GM23248 (cell line): ENCODE measurements at regions of chr9 and their contacts with region 1.

Region 1: DNA sequence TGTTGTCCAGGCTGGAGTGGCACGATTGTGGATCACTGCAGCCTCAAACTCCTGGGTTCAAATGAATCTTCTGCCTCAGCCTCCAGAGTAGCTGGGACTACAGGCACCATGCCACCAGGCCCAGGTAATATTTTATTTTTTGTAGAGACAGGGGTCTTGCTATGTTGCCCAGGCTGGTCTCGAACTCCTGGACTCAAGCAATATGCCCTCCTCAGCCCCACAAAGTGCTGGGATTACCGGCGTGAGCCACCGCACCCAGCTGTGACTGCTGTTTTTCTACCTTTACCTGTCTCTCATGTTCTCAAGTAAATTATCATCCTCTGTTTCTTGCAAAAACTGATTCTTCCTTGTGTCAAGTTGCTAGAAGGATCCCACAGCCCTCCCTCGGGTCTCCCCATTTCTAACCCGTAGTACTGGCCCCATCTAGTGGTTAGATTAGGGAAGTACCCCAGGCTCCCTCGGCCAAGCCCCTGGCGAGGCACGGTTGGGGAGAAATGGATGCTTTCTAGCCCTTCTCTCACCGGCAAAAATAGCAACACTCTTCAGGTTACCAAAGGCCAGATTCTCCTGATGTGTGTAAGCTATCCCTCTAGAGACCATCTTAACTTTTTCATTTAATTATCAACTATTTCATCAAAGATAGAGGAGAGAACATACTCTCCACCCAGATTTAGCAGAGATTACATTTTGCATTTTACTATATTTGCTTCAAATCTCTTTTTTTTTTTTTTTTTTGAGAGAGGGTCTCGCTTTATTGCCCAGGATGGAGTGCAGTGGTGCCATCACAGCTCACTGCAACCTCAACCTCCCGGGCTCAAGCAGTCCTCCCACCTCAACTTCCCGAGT is 19.2 kb upstream of the TOR1B start:
- DNase-seq: peak; percentile 84
- H3K4me3 ChIP-seq: no peak overlapping the region
- H3K27ac ChIP-seq: peak overlapping the region; percentile 52; the same call in 1 of the 2 replicates
- H3K4me1 ChIP-seq: peaks cover 18% of the 10 kb centered on the region
- H3K27me3 ChIP-seq: no peaks in the 10 kb centered on the region

Region 2: GRCh38 chr9:128875790-128876160 is 908.0 kb before region 1 on chr9:
- in situ Hi-C with region 1: no loop called
- DNase-seq: no peak
- H3K4me3 ChIP-seq: no peak overlapping the region
- H3K27ac ChIP-seq: no peak overlapping the region
- H3K4me1 ChIP-seq: no peaks in the 10 kb centered on the region; the same call in 1 of the 2 replicates
- H3K27me3 ChIP-seq: no peaks in the 10 kb centered on the region

Region 3: DNA sequence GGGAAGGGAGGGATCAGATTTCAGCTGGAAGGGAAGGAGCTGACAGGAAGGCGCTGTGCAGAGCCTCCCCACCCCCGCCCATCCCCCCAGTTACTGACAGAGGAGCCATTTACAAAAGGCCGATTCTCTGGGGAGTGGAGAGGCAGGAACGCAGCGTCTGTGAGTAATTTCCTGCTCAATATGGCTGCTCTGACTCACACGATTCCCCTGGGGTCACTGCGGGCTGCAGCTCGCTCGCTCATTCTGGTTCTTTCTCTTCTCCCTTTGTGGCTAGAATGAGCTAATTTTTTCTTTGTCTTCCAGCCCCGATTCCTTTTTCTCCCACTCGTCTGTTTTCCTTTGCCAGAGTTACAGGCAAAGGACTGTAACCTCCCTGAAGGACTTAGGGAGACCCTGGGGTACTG is 643.7 kb before region 1 on chr9:
- in situ Hi-C with region 1: loop called (anchors 10 kb)
- DNase-seq: peak; percentile 100
- H3K4me3 ChIP-seq: peak overlapping the region; percentile 70
- H3K27ac ChIP-seq: peak overlapping the region; percentile 100
- H3K4me1 ChIP-seq: peaks cover 56% of the 10 kb centered on the region
- H3K27me3 ChIP-seq: no peaks in the 10 kb centered on the region

Region 4: DNA sequence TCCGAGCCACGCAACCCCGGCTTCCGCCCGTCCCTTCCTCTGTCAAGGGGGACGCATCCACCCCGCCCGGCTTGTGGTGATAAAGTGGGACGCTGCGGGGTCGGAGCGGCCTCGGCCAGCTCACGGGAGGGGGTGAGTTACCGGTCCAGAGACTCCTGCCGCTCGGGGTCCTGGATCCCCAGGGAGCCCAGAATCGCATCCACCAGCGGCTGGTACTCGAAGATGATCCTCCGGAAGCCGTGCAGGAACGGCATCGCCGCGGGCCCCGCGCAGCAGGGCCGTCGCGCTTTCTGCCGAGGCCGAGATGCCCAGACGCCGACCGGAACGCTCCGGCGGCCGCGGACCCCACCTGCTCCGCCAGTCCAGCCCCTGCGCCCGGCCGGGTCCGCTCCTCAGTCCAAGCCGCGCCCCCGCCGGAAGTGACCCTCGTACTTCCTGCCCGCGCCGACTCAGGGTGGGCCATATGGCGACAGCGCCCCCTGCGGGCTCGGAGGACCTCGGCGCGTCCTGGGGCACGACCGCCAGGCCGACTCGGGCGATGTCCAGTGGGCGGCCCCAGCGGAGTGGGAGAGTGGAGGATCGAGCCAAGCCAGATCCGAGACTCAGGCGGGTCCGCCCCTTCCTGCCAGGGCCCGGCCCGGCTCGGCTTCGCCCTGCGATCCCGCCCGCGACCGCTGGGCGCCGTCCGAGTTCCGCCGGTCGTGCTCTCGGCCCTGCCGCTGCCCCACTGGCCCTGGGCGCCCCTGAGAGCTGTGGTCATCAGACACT is 141.8 kb before region 1 on chr9 and contains the start of gene ASB6:
- in situ Hi-C with region 1: loop called (anchors 5 kb)
- DNase-seq: peak; percentile 99
- H3K4me3 ChIP-seq: peak within 1 kb of the TSS; percentile 84
- H3K27ac ChIP-seq: peak within 1 kb of the TSS; percentile 74
- H3K4me1 ChIP-seq: peaks cover 12% of the 10 kb centered on the region
- H3K27me3 ChIP-seq: no peaks in the 10 kb centered on the region
- total RNA-seq, gene ASB6: 22.9 and 24.9 TPM in 2 replicates

Region 5: GRCh38 chr9:129737479-129738274 is 46.1 kb before region 1 on chr9:
- in situ Hi-C with region 1: loop called (anchors 5 kb)
- DNase-seq: peak; percentile 89
- H3K4me3 ChIP-seq: peak overlapping the region; percentile 76
- H3K27ac ChIP-seq: no peak overlapping the region
- H3K4me1 ChIP-seq: no peaks in the 10 kb centered on the region
- H3K27me3 ChIP-seq: no peaks in the 10 kb centered on the region